ENCODE measurements at regions of chr11 and their contacts with region 1.

Region 1: DNA sequence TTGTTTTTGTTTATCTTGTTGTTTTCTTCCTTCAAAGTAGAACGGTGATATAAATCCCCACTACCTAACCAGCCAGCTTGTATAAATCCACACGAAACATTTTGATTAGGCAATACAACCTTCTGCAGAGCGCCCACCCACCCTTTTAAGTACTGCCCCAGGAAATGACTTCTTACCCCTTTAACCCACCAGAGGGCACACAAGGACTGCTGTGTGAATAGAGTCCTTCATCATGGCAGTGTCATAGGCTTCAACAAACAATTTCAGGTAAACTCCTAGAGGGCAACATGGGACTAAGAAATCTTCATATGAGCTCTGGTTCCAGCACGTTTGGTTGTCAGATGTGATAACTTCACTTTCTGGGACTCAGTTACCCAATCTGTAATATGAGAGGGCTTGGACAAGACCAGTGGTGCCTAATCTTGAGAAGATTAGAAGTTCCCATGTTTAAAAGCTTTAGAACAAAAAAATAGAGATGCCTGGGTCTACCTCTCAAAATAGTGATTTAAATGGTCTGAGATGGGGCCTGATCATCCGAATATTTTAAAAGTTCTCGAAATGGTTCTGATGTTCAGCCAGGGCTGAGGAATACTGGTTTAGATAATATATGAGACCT is 56.1 kb downstream of the PIWIL4 start:
- DNase-seq: peak; percentile 77
- H3K4me3 ChIP-seq: peak overlapping the region in 1 of 2 experiments; percentile 10; a peak in 1 of 4 replicates
- H3K27ac ChIP-seq: no peak overlapping the region
- H3K4me1 ChIP-seq: no peaks in the 10 kb centered on the region
- H3K27me3 ChIP-seq: no peaks in the 10 kb centered on the region
- CTCF ChIP-seq: peak; percentile 82
- EP300 ChIP-seq: no peak
- RAD21 ChIP-seq: peak; percentile 99

Region 2: GRCh38 chr11:94613120-94613519 is 10.1 kb before region 1 on chr11:
- CTCF ChIA-PET with region 1: interaction called, 41 read pairs
- POLR2A ChIA-PET with region 1: no interaction called
- DNase-seq: no peak
- H3K4me3 ChIP-seq: no peak overlapping the region
- H3K27ac ChIP-seq: no peak overlapping the region
- H3K4me1 ChIP-seq: no peaks in the 10 kb centered on the region
- H3K27me3 ChIP-seq: no peaks in the 10 kb centered on the region
- CTCF ChIP-seq: no peak
- EP300 ChIP-seq: no peak
- RAD21 ChIP-seq: no peak

Region 3: GRCh38 chr11:94731880-94732601 is 108.8 kb after region 1 on chr11:
- CTCF ChIA-PET with region 1: interaction called, 10 read pairs
- POLR2A ChIA-PET with region 1: no interaction called
- DNase-seq: peak; percentile 49
- H3K4me3 ChIP-seq: no peak overlapping the region
- H3K27ac ChIP-seq: peak overlapping the region; percentile 44 to 85
- H3K4me1 ChIP-seq: peaks cover 20 to 36% of the 10 kb centered on the region in 2 experiments; a peak in 3 of 4 replicates
- H3K27me3 ChIP-seq: no peaks in the 10 kb centered on the region
- CTCF ChIP-seq: no peak
- EP300 ChIP-seq: peak in 1 of 2 experiments; percentile 71; a peak in 1 of 4 replicates
- RAD21 ChIP-seq: no peak

Region 4: GRCh38 chr11:94767761-94768601 is 144.8 kb after region 1 on chr11 and contains the start of gene AMOTL1:
- CTCF ChIA-PET with region 1: interaction called, 87 read pairs
- POLR2A ChIA-PET with region 1: interaction called, 4 read pairs
- DNase-seq: peak; percentile 94
- H3K4me3 ChIP-seq: peak within 1 kb of the TSS; percentile 89 to 97
- H3K27ac ChIP-seq: peak within 1 kb of the TSS; percentile 75 to 95
- H3K4me1 ChIP-seq: peaks cover 14 to 21% of the 10 kb centered on the region in 2 experiments; a peak in 3 of 4 replicates
- H3K27me3 ChIP-seq: no peaks in the 10 kb centered on the region
- CTCF ChIP-seq: no peak; the same call in 1 of the 2 replicates
- EP300 ChIP-seq: peak in 1 of 2 experiments; percentile 60; a peak in 2 of 4 replicates
- RAD21 ChIP-seq: peak; percentile 53
- polyA plus RNA-seq, gene AMOTL1: 10.7 and 11.7 TPM in 2 replicates

Region 5: DNA sequence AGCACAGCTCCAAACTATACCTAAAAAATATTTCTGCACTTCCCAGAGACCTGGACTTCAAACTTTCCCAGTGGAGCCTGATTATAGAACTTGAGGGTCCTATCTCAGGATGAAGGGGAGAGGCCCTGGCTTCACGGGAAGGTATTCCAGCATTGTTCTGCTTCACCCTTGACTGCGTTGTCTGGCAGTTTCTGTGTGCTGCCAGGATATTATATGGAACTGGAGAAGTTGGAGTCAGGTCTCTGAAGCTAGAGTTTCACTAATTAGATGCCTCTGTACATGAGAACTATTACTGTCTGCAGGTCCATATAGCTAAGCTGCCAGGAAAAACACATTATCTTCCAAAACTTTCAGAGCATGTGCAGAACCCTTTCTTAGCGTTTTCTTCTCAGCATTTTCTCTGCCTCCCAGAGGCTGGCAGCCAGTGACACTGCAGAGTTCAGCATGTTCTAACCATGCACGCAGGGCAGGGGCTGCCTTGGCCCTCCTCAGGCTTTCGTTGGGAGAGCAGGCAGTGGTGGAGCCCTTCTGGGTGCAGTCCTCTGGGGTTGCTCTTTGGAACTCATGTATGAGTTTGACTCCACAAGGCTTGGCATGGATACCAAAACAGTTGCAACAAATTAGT is 250.8 kb after region 1 on chr11:
- CTCF ChIA-PET with region 1: interaction called, 10 read pairs
- POLR2A ChIA-PET with region 1: no interaction called
- DNase-seq: no peak
- H3K4me3 ChIP-seq: no peak overlapping the region
- H3K27ac ChIP-seq: no peak overlapping the region; a peak in 1 of 4 replicates
- H3K4me1 ChIP-seq: peaks cover 12 to 17% of the 10 kb centered on the region in 2 experiments; a peak in 3 of 4 replicates
- H3K27me3 ChIP-seq: no peaks in the 10 kb centered on the region
- CTCF ChIP-seq: no peak
- EP300 ChIP-seq: no peak
- RAD21 ChIP-seq: no peak

Region 6: DNA sequence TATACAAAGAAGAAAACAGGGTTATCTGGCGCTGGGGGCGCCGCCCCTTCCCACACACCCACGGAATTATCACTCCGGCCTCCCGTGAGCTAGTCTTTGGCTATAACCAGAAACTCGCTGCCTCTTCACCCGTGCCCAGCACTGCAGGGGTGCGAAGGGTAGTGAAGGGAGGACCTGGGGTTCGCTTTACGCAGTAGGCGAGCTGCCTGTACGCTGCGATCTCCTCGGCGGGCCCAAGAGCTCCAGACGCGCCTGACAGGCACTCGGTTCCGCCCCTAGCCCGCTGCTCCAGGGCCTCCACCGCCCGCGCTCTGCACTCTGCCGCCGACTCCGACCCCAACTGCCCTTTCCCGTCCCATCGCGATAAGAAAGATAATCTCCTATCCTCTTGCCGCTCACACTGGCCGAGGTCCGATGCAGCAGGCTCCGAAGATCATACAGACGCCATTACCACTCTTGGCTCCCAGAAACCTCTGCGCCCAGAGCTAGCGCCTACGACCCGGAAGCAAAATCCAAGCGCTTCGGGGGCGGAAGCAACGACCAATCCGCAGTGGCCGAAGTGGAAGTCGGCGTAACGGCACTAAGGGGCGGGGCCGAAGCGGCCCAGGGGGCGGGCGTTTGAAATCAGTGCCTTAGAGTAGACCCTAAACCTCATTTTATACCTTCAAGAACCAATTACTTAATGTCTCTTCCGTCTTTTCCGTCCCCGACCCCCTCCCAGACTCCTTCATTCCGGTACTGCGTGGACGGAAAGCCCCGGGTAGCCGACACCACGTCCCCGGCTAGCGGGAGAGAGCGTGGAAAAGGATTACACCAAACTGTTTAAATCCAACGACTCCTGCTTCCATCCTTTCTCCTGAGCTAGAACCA is 350.1 kb after region 1 on chr11 and contains the starts of genes CWC15 and KDM4D:
- CTCF ChIA-PET with region 1: interaction called, 27 read pairs
- POLR2A ChIA-PET with region 1: interaction called, 3 read pairs
- DNase-seq: peak; percentile 93
- H3K4me3 ChIP-seq: peak within 1 kb of the TSS; percentile 78 to 97
- H3K27ac ChIP-seq: peak within 1 kb of the TSS; percentile 68 to 86
- H3K4me1 ChIP-seq: peaks cover 6 to 7% of the 10 kb centered on the region in 2 experiments; a peak in 2 of 4 replicates
- H3K27me3 ChIP-seq: no peaks in the 10 kb centered on the region
- CTCF ChIP-seq: no peak
- EP300 ChIP-seq: peak in 1 of 2 experiments; percentile 22; a peak in 1 of 4 replicates
- RAD21 ChIP-seq: no peak
- polyA plus RNA-seq, gene CWC15: 27.0 and 33.5 TPM in 2 replicates
- polyA plus RNA-seq, gene KDM4D: 1.1 and 1.2 TPM in 2 replicates

Region 7: GRCh38 chr11:95231127-95231880 is 608.1 kb after region 1 on chr11 and contains the start of gene SESN3:
- CTCF ChIA-PET with region 1: no interaction called
- POLR2A ChIA-PET with region 1: no interaction called
- DNase-seq: peak; percentile 93
- H3K4me3 ChIP-seq: peak within 1 kb of the TSS; percentile 79 to 91
- H3K27ac ChIP-seq: peak within 1 kb of the TSS; percentile 31 to 99; a peak in 3 of 4 replicates
- H3K4me1 ChIP-seq: peaks cover 11 to 18% of the 10 kb centered on the region in 2 experiments; a peak in 3 of 4 replicates
- H3K27me3 ChIP-seq: no peaks in the 10 kb centered on the region
- CTCF ChIP-seq: no peak
- EP300 ChIP-seq: peak; percentile 18 to 80; a peak in 3 of 4 replicates
- RAD21 ChIP-seq: peak; percentile 55
- polyA plus RNA-seq, gene SESN3: 1.7 and 2.2 TPM in 2 replicates

Measured in SK-N-SH (cell line).